ENCODE measurements at regions of chr6 and their contacts with region 1.

Region 1: DNA sequence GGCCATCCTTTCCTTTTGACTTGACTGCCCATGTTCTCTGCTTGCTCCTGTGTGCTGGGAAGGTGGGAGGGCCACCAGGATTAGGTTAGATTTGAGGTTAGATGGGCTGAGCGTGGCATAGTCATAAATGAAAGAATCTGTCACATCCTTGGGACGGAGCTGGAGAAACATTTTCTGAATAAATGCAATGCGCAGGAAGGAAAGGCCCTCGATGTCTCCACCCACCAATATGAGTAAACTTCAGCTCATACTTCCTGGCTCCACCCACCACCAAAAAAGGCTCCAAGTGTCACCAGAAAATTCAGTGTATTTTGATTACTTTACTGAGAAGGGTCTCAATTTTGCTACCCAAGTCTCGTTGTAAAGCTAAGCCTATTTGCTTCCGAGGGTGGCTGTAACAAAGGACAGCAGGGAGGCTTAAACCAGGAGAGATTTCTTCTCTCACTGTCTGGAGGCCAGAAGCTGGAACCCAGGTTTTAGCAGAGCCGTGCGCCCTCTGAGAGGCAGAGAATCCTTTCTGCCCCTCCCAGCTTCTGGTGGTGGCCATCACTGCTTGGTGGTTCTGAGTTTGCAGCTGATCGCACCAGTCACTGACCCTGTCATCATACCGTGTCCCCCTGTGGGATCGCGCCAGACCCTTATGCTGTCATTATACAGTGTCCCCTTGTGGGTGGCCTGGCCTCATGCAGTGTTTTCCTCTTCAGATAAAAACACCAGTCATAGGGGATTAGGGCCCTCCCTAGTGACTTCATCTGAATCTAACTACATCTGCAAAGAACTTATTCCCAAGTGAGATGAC is 137.8 kb downstream of the TTLL2 start:
- DNase-seq: no peak
- H3K4me3 ChIP-seq: no peak overlapping the region
- H3K27ac ChIP-seq: no peak overlapping the region
- H3K4me1 ChIP-seq: no peaks in the 10 kb centered on the region
- H3K27me3 ChIP-seq: no peaks in the 10 kb centered on the region; a peak in 1 of 7 replicates
- CTCF ChIP-seq: no peak
- EP300 ChIP-seq: no peak
- POLR2A ChIP-seq: no peak
- RAD21 ChIP-seq: no peak

Region 2: DNA sequence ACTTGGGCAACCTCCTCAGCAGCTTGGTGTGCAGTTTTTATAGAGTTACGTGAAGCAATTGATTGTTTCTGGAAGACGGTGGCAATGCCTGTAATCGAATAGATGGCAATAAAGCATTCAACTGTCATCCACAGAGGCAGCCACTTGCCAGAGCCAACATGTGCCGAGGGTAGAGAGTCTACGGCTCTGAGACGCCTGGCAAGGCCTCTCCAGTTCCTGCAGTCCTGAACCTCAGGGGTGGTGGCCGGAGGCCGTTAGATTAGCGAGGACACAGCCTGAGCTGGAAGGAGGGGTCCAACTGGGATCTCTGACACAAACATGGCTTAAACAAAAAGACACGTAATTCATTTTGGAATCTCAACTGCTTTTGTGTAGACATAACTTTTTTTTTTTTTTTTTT is 138.6 kb before region 1 on chr6:
- CTCF ChIA-PET with region 1: no interaction called
- POLR2A ChIA-PET with region 1: no interaction called
- DNase-seq: no peak
- H3K4me3 ChIP-seq: no peak overlapping the region
- H3K27ac ChIP-seq: no peak overlapping the region
- H3K4me1 ChIP-seq: no peaks in the 10 kb centered on the region
- H3K27me3 ChIP-seq: no peaks in the 10 kb centered on the region
- CTCF ChIP-seq: no peak
- EP300 ChIP-seq: no peak
- POLR2A ChIP-seq: no peak
- RAD21 ChIP-seq: no peak

Region 3: DNA sequence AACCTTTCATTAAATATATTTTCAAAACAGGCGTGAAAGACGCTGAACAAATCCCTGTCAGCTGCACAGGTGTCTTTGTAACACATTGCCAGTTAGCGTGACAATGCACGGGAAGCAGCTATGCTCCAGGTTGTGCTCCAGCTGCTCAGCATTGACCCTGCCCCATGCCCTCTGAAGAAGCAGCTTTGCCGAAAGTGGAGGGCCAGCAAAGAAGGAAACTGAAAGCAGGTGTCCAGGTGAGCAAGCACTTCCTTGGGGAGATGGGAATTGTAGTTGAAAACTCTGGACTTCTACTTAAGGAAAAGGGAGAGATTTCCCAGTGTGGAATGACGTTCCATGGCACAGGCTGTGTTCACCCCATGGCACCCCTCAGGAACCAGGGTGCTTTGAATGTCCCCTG is 12.1 kb before region 1 on chr6:
- CTCF ChIA-PET with region 1: interaction called, 11 read pairs
- POLR2A ChIA-PET with region 1: interaction called, 3 read pairs
- DNase-seq: no peak
- H3K4me3 ChIP-seq: no peak overlapping the region
- H3K27ac ChIP-seq: no peak overlapping the region
- H3K4me1 ChIP-seq: peaks cover 0 to 7% (median 1%) of the 10 kb centered on the region in 4 experiments; a peak in 5 of 7 replicates
- H3K27me3 ChIP-seq: no peaks in the 10 kb centered on the region
- CTCF ChIP-seq: no peak
- EP300 ChIP-seq: no peak
- POLR2A ChIP-seq: no peak
- RAD21 ChIP-seq: no peak

Measured in H1 (cell line).